Ovary (tissue), 10 donors: ENCODE measurements at regions of chr15 and their contacts with region 1.

Region 1: DNA sequence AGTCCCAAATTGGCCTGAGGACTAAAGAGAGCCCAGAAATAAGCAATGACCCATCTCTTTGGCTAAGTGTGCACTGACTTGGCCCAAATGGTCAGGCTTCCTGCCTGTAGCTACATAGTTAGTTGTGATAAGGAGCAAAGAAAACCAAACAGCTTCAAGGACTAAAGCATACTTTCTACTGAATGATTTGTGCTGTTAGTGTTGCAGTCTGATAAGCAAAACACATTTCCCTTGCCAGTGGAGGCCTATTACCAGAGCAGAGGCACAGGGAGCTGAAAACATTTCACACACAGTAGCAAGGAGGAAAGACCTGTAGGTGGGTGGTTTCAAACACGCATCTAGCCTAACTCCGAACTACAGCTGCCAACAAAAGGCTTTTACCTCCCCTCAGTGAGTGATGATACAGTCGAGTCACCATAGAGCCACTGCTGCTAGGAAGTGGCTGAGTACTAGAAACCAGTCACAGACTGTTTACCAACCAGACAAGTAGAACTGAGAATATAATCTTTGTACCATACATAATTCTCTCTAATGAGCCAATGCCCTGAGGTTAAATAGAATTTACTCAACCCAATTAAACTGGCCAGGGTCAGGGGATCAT is 222.3 kb upstream of the THBS1 start:
- DNase-seq: peak; percentile 50 to 69 (median 61)
- H3K4me3 ChIP-seq: no peak overlapping the region
- H3K27ac ChIP-seq: peak overlapping the region in 1 of 2 donors; percentile 46
- H3K4me1 ChIP-seq: peaks cover 5% of the 10 kb centered on the region
- H3K27me3 ChIP-seq: no peaks in the 10 kb centered on the region
- CTCF ChIP-seq: no peak
- EP300 ChIP-seq: no peak
- POLR2A ChIP-seq: no peak

Region 2: GRCh38 chr15:39171944-39172368 is 186.6 kb before region 1 on chr15:
- intact Hi-C with region 1: loop called in 1 of 4 experiments (anchors 10 kb)
- DNase-seq: peak; percentile 56 to 78 (median 67)
- H3K4me3 ChIP-seq: no peak overlapping the region
- H3K27ac ChIP-seq: peak overlapping the region in 1 of 2 donors; percentile 27
- H3K4me1 ChIP-seq: peaks cover 11% of the 10 kb centered on the region
- H3K27me3 ChIP-seq: no peaks in the 10 kb centered on the region
- CTCF ChIP-seq: peak in 2 of 3 donors; percentile 32 to 40
- EP300 ChIP-seq: no peak
- POLR2A ChIP-seq: no peak

Region 3: DNA sequence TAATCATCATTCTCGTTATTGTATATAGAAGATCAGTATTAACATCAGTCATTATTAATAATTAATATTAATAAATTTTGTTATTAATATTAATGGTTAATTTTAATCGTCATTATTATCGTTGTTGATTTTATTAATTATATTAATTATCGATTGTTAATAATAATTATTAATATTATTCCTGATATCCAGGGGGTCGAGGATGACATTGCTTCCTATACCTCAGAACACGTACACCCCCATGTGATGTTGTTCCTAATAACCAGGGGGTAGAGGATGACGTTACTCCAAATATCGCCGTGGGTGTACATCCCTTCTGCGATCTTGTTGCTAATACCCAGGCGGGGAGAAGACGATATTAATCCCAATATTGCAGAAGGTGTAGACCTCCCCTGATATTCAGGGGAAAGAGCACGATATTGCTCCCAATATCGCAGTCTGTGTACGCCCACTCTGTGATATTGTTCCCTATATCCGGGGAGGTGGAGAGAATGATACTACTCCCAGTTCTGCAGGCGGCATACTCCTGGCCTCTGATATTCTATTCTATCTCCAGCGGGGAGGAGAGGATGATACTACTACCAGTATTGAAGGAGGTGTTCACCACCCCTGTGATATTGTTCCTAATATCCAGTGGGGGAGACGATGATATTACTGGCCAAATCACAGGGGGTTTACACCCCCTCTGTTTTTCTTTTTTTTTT is 772.4 kb after region 1 on chr15:
- intact Hi-C with region 1: no loop called
- DNase-seq: no peak
- H3K4me3 ChIP-seq: no peak overlapping the region
- H3K27ac ChIP-seq: no peak overlapping the region
- H3K4me1 ChIP-seq: no peaks in the 10 kb centered on the region
- H3K27me3 ChIP-seq: no peaks in the 10 kb centered on the region
- CTCF ChIP-seq: no peak
- EP300 ChIP-seq: no peak
- POLR2A ChIP-seq: no peak